Activated CD4-positive, alpha-beta T cell treated with anti-CD3 and anti-CD28 coated beads, Interleukin-2, amount 10 ng/mL, durations not matched to agents 24 days and 14 days (primary cell): ENCODE measurements at regions of chr5 and their contacts with region 1.

Region 1: GRCh38 chr5:79990598-79991507 is at the start of gene MTX3:
- DNase-seq: peak; percentile 96
- H3K4me3 Mint-ChIP-seq: peak within 1 kb of the TSS; percentile 94
- H3K27ac Mint-ChIP-seq: peak within 1 kb of the TSS; percentile 99
- H3K4me1 Mint-ChIP-seq: peaks cover 34% of the 10 kb centered on the region
- H3K27me3 Mint-ChIP-seq: peaks cover 3% of the 10 kb centered on the region
- total RNA-seq, gene MTX3: 26.8 and 27.8 TPM in 2 replicates

Region 2: DNA sequence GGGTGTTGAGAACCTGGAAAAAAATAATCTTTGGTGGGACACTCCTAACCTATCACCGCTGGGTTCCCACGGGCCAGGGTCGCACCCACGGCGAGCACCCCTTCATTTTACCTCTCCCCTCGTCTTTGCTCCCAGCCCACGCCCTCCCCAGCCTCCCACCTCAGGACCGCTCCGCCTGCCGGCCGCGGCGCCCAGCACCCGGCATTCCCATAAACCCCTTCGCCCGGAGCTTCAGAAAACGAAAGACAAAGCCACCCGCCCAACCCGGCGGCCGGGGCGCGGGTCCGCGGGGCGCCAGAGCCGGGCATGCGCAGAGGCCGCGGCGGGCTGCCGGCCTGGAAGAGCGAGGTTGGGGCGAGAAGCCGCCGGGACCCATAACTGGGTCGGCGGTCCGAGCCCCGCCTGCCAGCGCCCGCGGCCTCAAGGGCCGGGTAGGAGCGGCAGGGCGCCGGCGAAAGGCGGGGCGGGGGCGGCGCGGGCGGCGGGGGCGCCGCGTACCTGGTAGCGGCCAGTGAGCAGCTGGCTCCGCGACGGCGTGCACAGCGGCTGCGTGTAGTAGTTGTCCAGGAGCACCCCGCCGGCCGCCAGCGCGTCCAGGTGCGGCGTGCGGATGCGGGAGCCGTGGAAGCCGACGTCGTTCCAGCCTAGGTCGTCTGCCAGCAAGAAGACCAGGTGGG is 1006.3 kb before region 1 on chr5:
- intact Hi-C with region 1: loop called (anchors 10 kb)
- DNase-seq: peak; percentile 95
- H3K4me3 Mint-ChIP-seq: peak overlapping the region; percentile 88
- H3K27ac Mint-ChIP-seq: peak overlapping the region; percentile 92
- H3K4me1 Mint-ChIP-seq: peaks cover 34% of the 10 kb centered on the region
- H3K27me3 Mint-ChIP-seq: no peaks in the 10 kb centered on the region

Region 3: GRCh38 chr5:79560771-79561524 is 429.9 kb before region 1 on chr5:
- intact Hi-C with region 1: loop called (anchors 1 kb)
- DNase-seq: peak; percentile 76
- H3K4me3 Mint-ChIP-seq: peak overlapping the region; percentile 61
- H3K27ac Mint-ChIP-seq: peak overlapping the region; percentile 97
- H3K4me1 Mint-ChIP-seq: peaks cover 31% of the 10 kb centered on the region
- H3K27me3 Mint-ChIP-seq: no peaks in the 10 kb centered on the region

Region 4: DNA sequence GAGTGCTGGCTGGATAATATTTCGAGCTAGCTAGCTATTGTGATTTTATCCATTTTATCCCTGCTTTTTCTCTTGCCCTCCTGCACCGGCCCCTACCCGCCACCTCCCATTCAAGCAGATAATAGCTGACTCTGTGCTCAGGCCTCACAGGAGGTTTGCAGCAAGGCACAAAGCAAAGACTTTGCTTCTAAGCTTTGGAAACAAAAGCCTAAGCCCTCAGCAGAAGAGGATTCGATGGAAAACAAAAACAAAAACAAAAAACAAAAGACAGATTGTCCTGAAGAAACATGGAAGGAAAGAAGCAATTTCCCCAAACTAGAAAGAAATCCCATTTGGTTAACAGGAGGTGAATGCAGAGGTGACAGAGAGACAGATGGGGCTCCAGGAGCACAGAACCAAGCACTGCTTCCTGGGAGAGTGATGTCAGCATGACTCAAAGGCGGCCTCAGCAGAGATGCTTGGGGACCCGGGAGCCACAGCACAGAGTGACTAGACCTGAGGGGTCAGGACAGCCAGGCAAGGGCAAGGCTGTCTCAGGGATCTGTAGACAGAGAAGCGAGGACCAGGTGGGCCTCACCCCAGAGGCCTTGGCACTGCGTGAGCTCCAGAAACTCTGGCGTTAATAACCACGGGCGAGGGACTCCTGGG is 28.2 kb before region 1 on chr5:
- intact Hi-C with region 1: loop called (anchors 1 kb)
- DNase-seq: peak; percentile 67
- H3K4me3 Mint-ChIP-seq: peak overlapping the region; percentile 54
- H3K27ac Mint-ChIP-seq: peak overlapping the region; percentile 90
- H3K4me1 Mint-ChIP-seq: peaks cover 25% of the 10 kb centered on the region
- H3K27me3 Mint-ChIP-seq: peaks cover 3% of the 10 kb centered on the region

Region 5: DNA sequence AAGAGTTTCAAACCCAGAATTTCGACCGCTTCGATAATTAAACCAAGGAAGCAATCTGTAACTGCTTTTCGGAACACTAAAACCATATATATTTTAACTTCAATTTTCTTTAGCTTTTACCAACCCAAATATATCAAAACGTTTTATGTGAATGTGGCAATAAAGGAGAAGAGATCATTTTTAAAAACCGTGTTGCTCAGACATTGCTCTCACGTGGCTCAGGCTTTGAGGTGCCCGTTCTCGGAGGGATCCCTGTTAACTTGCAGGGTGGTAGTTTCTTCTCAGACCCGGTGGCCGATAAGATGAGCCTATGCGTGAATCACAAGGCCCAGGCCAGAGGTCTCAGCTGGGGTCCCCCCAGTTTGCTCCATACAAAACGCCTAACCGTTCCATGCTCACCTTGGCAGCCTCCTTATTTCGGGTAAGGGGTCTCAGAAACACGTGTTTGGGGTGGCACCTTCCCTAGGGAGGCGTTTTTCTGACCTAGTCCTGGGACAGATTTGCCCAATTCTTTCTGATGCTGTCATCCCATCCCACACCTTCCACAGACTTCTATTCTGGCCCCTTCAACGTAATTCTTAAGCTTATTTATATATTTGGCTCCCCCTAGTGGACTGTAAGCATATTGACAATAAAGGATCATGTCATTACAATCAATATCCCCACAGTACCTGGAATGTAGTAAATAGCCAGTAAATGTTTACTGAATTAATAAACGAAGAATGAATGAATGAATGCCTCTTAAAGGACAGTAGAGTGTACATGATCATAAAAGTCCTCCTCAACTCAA is 92.4 kb after region 1 on chr5:
- intact Hi-C with region 1: loop called (anchors 2 kb)
- DNase-seq: peak; percentile 72
- H3K4me3 Mint-ChIP-seq: peak overlapping the region; percentile 76
- H3K27ac Mint-ChIP-seq: peak overlapping the region; percentile 81
- H3K4me1 Mint-ChIP-seq: peaks cover 7% of the 10 kb centered on the region
- H3K27me3 Mint-ChIP-seq: no peaks in the 10 kb centered on the region

Region 6: GRCh38 chr5:80181618-80182211 is 190.9 kb after region 1 on chr5:
- intact Hi-C with region 1: loop called (anchors 5 kb)
- DNase-seq: peak; percentile 87
- H3K4me3 Mint-ChIP-seq: peak overlapping the region; percentile 63
- H3K27ac Mint-ChIP-seq: peak overlapping the region; percentile 92
- H3K4me1 Mint-ChIP-seq: peaks cover 65% of the 10 kb centered on the region
- H3K27me3 Mint-ChIP-seq: no peaks in the 10 kb centered on the region

Region 7: DNA sequence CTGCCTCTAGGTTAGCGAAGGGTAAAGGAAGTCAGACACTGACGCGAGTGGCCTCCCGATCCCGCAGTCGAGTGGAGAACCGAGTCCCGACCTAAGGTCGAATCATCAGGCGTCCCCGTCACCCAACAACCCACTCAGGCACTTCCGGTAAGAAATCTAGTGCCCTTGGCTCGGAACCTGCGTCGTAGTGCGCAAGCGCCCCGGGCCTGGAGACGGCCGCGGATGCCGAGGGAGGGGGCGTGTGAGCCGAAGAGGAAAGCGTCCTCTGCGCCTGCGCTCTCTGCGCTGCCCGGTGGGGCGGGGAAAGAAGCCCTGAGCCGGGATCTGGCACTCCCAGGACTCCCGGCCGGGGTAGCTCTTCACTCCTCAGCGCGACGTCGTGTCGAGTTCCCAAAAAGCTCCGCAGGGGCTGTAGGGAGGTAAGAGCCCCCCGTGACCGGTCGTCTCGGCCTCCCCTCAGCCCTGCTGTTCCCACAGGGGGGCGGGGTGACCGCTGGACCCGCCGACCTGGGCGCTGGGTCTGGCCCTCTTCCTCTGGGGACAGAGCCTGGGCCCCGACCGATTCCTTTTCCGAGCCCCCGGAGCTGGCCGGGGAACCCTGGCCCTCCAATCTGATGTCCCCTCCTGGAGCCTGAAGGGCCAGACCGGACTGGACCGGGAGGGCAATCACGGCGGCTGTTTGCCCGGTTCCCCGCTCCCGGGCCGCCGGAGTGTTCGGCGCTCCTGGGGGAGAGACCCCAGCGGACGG is 417.1 kb after region 1 on chr5 and contains the start of gene ZFYVE16:
- intact Hi-C with region 1: loop called (anchors 2 kb)
- DNase-seq: peak; percentile 99
- H3K4me3 Mint-ChIP-seq: peak within 1 kb of the TSS; percentile 97
- H3K27ac Mint-ChIP-seq: peak within 1 kb of the TSS; percentile 99
- H3K4me1 Mint-ChIP-seq: peaks cover 15% of the 10 kb centered on the region
- H3K27me3 Mint-ChIP-seq: peaks cover 7% of the 10 kb centered on the region
- total RNA-seq, gene ZFYVE16: 8.1 and 9.4 TPM in 2 replicates

Region 8: DNA sequence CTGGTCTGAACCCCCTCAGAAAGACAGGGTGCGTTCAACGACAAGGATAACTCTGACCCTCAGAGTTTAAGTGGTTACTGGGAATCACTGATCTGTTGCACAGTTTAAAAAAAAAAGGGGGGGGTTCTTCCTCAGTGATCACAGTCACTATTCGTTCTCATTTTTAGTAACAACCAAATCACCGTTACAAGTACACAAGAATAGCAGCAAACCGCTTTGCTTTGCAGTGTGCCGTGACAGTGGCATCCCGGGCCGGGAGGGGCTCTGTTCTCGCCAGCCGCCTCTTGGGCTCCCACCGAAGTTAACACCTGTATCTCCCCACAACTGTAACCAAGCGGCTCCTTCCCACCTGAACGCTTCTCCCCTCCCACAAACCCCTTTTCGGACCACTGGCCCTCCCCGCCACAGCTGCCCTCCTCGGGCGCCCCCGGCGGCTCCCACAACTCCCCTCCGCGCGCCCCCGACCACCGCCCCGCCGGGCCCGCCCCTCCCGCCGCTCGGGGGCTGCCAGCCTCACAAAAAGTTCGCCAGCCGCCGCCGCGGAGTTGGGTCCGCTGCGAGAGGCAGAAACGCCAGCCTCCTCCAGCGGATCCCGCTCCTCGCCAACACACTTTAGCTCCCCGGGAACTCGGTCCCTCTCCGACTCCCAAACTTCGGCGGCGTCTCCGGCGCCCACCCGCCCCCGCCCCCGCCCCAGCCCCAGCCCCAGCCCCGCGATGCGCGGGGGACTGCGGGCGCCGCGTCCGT is 1758.9 kb after region 1 on chr5:
- intact Hi-C with region 1: no loop called
- DNase-seq: peak; percentile 82
- H3K4me3 Mint-ChIP-seq: peak overlapping the region; percentile 89
- H3K27ac Mint-ChIP-seq: peak overlapping the region; percentile 92
- H3K4me1 Mint-ChIP-seq: peaks cover 16% of the 10 kb centered on the region
- H3K27me3 Mint-ChIP-seq: peaks cover 27% of the 10 kb centered on the region